ENCODE measurements at regions of chr4 and their contacts with region 1.

Region 1: GRCh38 chr4:44629280-44629866 is 22.1 kb downstream of the YIPF7 start:
- DNase-seq: peak in 4 of 10 donors; percentile 11 to 55 (median 16)

Region 2: DNA sequence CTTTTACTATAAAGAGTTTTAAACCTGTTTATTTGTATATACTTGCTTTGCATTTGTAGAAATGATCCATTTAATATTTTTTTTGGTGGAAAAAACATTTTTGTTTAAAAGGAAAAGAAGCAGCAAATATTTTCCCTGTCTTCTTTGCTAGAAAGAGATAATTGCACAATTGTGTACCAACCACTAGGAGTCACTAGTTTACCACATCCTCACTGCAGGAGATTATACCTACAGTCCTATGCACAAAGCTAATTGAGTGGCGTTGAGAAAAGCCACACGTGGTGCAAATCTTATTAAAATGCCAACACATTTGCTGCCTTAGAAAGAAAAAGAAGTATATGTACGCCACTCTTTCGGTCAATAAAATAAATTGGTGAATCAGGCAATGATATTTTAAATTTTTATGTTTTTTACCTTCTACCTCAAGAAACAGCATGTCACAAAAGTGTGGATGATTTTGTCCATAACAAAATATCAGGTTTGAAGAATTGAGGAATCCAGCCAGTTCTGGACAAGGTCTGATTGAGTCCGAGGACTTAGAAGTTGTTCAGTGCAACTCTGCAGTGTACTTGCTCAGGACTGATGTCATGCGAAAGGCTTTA is 1633.9 kb before region 1 on chr4:
- intact Hi-C with region 1: loop called (anchors 2 kb)
- DNase-seq: no peak

Region 3: GRCh38 chr4:43132010-43132582 is 1497.3 kb before region 1 on chr4:
- intact Hi-C with region 1: loop called (anchors 5 kb)
- DNase-seq: peak; percentile 40 to 93 (median 76)

Region 4: GRCh38 chr4:44448548-44449461 is 180.6 kb before region 1 on chr4 and contains the start of gene KCTD8:
- intact Hi-C with region 1: loop called (anchors 10 kb)
- DNase-seq: peak; percentile 89 to 99 (median 96)

Region 5: GRCh38 chr4:44487341-44487740 is 142.0 kb before region 1 on chr4:
- intact Hi-C with region 1: no loop called
- DNase-seq: no peak

Region 6: DNA sequence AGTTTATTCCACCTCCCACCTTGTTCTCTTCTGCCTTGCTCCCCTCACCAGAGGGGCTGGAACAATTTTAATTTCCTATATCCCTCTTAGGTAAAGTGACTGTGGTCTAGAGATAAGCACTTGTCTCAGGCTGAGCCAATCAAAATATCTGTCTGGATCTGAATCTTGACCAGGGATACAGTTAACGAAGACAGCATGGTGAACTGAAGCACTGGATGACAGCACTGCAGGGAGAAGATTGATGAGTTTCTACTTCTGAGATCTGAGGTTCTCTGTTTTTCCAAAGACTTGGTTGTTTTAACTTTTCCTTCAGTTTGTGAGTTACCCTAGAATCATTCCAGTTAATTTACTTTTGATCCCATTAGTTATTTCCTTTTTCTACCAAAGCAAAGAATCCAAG is 83.8 kb after region 1 on chr4:
- intact Hi-C with region 1: no loop called
- DNase-seq: no peak

Region 7: DNA sequence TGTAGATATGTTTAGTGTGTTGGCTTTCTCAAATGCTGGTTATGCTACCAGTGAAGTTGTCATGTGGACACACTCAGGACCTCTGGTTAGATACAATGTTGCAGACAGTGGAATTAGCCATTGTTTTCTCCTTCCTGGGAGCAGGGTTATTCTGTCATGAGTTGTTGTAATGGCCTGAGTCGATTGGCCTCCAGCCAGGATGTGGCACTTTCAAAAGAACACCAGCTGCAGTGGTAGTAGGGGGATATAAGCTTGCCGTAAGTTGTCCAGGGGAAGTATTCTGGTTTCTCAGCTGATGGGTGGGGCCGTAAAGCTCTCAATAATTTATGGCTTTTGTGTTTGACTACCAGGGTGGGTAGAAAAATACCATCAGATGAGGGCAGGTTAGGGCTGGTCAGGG is 794.5 kb after region 1 on chr4:
- intact Hi-C with region 1: no loop called
- DNase-seq: no peak